ENCODE measurements at regions of chr1 and their contacts with region 1.

Region 1: GRCh38 chr1:161225534-161226319 is at the start of gene TOMM40L:
- DNase-seq: peak; percentile 71 to 98 (median 86)
- ATAC-seq: peak; percentile 95
- H3K4me3 ChIP-seq: peak within 1 kb of the TSS; percentile 78 to 95
- H3K4me3 Mint-ChIP-seq: peak within 1 kb of the TSS; percentile 100
- H3K27ac ChIP-seq: peak within 1 kb of the TSS; percentile 43 to 64
- H3K27ac Mint-ChIP-seq: peak within 1 kb of the TSS; percentile 97
- H3K4me1 ChIP-seq: peaks cover 40% of the 10 kb centered on the region
- H3K4me1 Mint-ChIP-seq: peaks cover 46% of the 10 kb centered on the region
- H3K27me3 ChIP-seq: no peaks in the 10 kb centered on the region
- H3K27me3 Mint-ChIP-seq: no peaks in the 10 kb centered on the region
- CTCF ChIP-seq: peak; percentile 63
- total RNA-seq, gene TOMM40L: 4.7 to 4.9 TPM

Region 2: DNA sequence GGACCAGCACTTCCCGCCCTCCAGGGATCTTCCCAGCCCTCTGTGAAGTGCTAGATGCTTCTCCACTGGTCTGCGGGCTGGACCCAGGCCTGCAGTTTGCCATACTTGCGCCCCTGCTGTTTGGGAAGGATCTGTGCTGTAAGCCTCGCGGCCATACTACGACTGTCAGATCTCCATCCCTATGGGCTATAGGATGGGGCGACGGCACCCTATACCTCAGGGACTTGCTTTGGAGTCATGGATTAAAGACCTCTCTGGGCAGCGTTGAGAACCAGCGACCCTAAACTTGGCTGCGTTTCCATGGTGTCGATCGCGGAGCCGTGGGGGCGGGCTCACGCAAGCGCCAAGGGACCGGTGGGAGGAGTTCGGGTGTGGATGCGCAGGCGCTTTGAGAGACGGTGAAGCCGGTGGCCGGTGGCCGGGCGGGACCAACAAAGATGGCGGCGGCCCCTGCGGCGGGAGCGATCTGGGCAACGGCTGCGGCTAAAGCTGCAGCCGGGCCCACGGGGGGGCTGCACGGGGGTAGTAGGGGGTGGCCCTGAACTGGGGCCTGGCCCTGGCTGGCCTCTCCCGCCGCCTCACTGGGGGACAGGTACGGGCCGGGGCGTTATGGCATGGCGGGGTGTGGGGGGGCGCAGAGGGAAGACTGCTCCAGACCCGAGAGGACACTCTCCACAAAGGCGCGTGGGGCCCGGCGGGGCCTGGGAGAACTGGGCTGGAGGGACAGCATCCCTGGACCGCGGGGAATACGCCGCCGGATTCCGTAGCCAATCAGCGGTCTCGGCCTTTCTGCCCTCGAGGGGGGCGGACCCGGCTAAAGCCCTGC is 66.4 kb before region 1 on chr1 and contains the start of gene USP21:
- CTCF ChIA-PET with region 1: interaction called, 41 read pairs
- POLR2A ChIA-PET with region 1: interaction called, 4 read pairs
- intact Hi-C with region 1: loop called (anchors 2 kb)
- DNase-seq: peak; percentile 84 to 95 (median 93)
- ATAC-seq: peak; percentile 96
- H3K4me3 ChIP-seq: peak within 1 kb of the TSS; percentile 76 to 82
- H3K4me3 Mint-ChIP-seq: peak within 1 kb of the TSS; percentile 94
- H3K27ac ChIP-seq: peak within 1 kb of the TSS; percentile 72 to 82
- H3K27ac Mint-ChIP-seq: peak within 1 kb of the TSS; percentile 95
- H3K4me1 ChIP-seq: peaks cover 37% of the 10 kb centered on the region
- H3K4me1 Mint-ChIP-seq: peaks cover 58% of the 10 kb centered on the region
- H3K27me3 ChIP-seq: no peaks in the 10 kb centered on the region
- H3K27me3 Mint-ChIP-seq: no peaks in the 10 kb centered on the region
- CTCF ChIP-seq: no peak
- total RNA-seq, gene USP21: 34.8 to 38.1 TPM

Region 3: DNA sequence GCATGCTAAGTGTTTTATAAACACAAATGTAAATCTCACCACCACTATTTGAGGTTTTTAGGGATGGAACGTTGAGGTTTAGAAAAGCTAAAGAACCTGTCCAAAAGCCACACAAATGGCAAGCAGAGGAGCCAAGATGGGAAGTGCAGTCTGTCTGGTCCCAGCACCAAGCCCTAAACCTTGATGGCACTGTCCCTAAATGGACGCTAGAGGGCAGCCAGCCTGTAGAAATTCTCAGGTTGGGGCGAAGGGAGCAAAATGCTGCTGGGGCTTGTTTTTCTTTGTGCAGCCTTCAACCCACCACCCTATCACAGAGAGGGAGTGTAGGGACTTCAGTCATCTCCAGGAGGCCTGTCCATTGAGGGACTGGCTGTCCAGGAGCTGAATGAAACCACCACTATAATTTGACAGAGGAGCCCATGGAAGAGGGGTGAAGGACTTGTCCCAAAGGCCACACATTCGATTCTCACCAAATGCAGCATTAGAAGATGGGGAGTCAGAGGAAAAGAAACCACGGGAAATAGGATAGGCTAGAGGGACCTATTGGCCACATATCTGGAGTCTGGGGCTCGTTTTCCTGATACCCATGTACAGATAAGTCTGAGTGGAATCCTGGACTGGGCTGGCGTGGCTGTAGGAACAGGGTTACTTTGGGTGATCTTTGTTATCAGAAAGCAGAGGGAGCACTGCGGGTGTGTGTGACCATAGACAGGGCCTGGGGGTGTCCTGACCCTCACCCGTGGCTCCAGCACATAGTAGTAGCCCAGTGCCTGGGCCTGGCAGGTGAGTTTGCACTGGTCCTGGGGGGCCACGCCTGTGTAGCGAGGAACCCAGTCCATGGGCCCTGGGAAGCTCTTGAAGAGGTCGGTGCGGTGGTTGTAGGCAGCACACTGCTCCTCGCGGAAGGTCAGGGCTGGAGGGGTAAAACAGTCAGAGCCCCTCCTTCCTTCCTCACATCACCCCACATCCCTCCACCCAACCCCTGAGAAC is 33.0 kb before region 1 on chr1:
- CTCF ChIA-PET with region 1: interaction called, 89 read pairs
- POLR2A ChIA-PET with region 1: interaction called, 8 read pairs
- intact Hi-C with region 1: loop called in 1 of 2 experiments (anchors 1 kb)
- DNase-seq: peak; percentile 39 to 85 (median 70)
- ATAC-seq: peak; percentile 98
- H3K4me3 ChIP-seq: no peak overlapping the region
- H3K4me3 Mint-ChIP-seq: no peak overlapping the region
- H3K27ac ChIP-seq: peak overlapping the region in 1 of 2 experiments; percentile 41
- H3K27ac Mint-ChIP-seq: peak overlapping the region; percentile 70
- H3K4me1 ChIP-seq: peaks cover 37% of the 10 kb centered on the region
- H3K4me1 Mint-ChIP-seq: peaks cover 40% of the 10 kb centered on the region
- H3K27me3 ChIP-seq: no peaks in the 10 kb centered on the region
- H3K27me3 Mint-ChIP-seq: no peaks in the 10 kb centered on the region
- CTCF ChIP-seq: peak; percentile 75

Region 4: GRCh38 chr1:161292631-161293030 is 66.9 kb after region 1 on chr1:
- CTCF ChIA-PET with region 1: interaction called, 76 read pairs
- POLR2A ChIA-PET with region 1: interaction called, 4 read pairs
- intact Hi-C with region 1: loop called (anchors 1 to 5 kb)
- DNase-seq: no peak
- ATAC-seq: no peak
- H3K4me3 ChIP-seq: no peak overlapping the region
- H3K4me3 Mint-ChIP-seq: no peak overlapping the region
- H3K27ac ChIP-seq: no peak overlapping the region
- H3K27ac Mint-ChIP-seq: no peak overlapping the region
- H3K4me1 ChIP-seq: no peaks in the 10 kb centered on the region
- H3K4me1 Mint-ChIP-seq: no peaks in the 10 kb centered on the region
- H3K27me3 ChIP-seq: no peaks in the 10 kb centered on the region
- H3K27me3 Mint-ChIP-seq: no peaks in the 10 kb centered on the region
- CTCF ChIP-seq: no peak

Region 5: DNA sequence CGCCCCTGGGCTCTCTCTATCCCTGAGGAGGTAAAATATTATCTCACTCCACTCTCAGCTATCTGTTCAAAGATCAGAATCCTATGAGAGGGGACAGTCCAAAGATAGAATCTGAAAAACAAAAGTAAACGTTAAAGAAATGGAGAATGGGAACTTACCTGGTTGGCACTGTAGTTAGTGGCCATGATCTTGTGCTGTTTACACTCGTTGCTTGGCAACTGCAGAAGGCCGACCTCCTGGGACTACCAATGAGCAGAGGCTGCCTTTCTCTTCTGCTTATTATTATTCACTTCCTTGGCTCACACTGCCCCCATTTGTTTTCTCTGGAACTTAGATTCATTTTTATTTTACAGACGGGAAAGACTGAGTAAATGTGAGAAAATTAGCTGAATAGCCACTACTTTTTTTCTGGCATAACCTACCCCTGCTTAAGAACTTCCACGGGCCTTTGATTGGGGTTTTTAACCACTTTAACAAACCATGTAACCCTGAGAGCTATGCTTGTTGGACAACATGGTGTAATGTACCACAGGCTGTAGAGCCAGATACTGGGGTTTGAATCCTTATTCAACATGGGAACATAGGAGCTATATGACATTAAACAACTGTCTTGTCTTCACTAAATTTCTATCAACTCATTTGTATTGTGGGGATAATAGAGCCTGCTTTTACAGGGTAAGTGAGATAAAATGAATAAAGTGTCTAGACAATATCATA is 142.1 kb after region 1 on chr1 and contains the start of gene CFAP126:
- CTCF ChIA-PET with region 1: interaction called, 3 read pairs
- POLR2A ChIA-PET with region 1: no interaction called
- intact Hi-C with region 1: loop called (anchors 1 to 5 kb)
- DNase-seq: peak in 6 of 9 experiments; percentile 20 to 87 (median 58)
- ATAC-seq: peak; percentile 100
- H3K4me3 ChIP-seq: no peak within 1 kb of the TSS
- H3K4me3 Mint-ChIP-seq: no peak within 1 kb of the TSS
- H3K27ac ChIP-seq: peak within 1 kb of the TSS; percentile 23 to 60
- H3K27ac Mint-ChIP-seq: peak within 1 kb of the TSS; percentile 46
- H3K4me1 ChIP-seq: peaks cover 5% of the 10 kb centered on the region
- H3K4me1 Mint-ChIP-seq: peaks cover 8% of the 10 kb centered on the region
- H3K27me3 ChIP-seq: no peaks in the 10 kb centered on the region
- H3K27me3 Mint-ChIP-seq: no peaks in the 10 kb centered on the region
- CTCF ChIP-seq: no peak
- total RNA-seq, gene CFAP126: not detected

Region 6: DNA sequence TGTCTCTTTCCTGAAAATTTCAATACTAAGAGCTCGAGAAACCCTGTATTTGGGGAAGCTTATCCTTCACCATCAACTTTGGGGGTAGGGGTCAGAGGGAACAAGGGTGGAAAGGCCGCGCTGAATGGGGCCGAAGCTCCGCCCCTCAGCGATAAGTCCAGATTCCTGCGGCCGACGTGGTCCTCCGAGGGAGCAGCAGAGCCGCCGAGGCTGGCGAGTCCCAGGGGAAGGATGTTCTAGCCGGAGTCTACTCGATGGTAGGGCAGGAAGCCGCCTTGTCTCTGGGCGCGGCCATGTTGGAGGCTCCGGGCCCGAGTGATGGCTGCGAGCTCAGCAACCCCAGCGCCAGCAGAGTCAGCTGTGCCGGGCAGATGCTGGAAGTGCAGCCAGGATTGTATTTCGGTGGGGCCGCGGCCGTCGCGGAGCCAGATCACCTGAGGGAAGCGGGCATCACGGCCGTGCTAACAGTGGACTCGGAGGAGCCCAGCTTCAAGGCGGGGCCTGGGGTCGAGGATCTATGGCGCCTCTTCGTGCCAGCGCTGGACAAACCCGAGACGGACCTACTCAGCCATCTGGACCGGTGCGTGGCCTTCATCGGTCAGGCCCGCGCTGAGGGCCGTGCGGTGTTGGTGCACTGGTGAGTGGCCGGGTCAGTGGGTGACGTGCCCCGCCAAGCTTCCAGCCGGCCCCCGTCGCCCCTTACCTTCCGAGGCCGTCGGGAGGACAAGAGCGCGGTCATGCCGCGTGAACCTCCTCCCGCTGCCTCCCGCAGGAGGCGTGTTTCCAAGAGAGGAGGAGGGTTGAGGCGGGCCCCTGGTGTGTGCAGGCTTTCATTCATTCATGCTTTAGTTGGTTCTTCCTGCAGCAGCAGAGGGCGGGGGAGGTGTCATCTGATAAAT is 524.0 kb after region 1 on chr1 and contains the start of gene DUSP12:
- CTCF ChIA-PET with region 1: no interaction called
- POLR2A ChIA-PET with region 1: interaction called, 5 read pairs
- intact Hi-C with region 1: loop called in 1 of 2 experiments (anchors 10 kb)
- DNase-seq: peak; percentile 70 to 92 (median 85)
- ATAC-seq: peak; percentile 95
- H3K4me3 ChIP-seq: peak within 1 kb of the TSS; percentile 88 to 99
- H3K4me3 Mint-ChIP-seq: peak within 1 kb of the TSS; percentile 100
- H3K27ac ChIP-seq: peak within 1 kb of the TSS; percentile 68 to 76
- H3K27ac Mint-ChIP-seq: peak within 1 kb of the TSS; percentile 96
- H3K4me1 ChIP-seq: peaks cover 23% of the 10 kb centered on the region
- H3K4me1 Mint-ChIP-seq: peaks cover 41% of the 10 kb centered on the region
- H3K27me3 ChIP-seq: no peaks in the 10 kb centered on the region
- H3K27me3 Mint-ChIP-seq: peaks cover 6% of the 10 kb centered on the region
- CTCF ChIP-seq: no peak
- total RNA-seq, gene DUSP12: 27.9 to 31.1 TPM